Activated CD4-positive, alpha-beta T cell treated with anti-CD3 and anti-CD28 coated beads for 36 hours (primary cell): ENCODE measurements at regions of chr21 and their contacts with region 1.

Region 1: DNA sequence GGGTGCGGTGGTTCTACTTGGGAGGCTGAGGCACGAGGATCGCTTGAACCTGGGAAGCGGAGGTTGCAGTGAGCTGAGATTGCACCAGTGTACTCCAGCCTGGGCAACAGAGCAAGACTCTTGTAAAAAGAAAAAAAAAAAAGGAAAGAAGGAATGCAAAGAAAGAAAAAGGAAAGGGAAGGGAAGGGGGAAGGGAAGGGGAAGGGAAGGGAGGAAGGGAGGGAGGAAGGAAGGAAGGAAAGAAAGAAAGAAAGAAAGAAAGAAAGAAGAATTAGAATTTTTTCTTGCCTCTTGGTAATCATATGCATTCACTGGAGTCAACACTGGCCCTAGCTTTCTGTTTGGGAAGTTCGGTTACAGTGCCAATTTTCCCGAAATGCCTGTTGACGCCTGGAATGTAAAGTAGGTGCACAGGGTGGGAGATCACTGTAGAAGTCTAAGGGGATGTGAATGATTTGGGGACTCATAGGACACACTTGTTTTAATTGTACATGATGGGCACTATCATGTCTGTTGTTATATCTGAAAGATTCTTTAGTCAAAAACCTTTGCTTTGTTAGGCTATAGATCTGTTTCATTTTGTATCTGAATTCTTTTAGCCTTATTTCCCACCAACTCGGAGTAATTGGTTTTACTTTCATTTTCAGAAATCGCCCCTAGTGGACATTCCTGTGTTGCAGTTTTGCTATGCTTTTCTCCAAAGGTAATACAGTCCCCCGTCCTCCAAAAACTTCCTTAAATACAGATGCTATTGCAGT is 59.8 kb upstream of the MORC3 start:
- DNase-seq: peak; percentile 52
- ATAC-seq: peak; percentile 82
- H3K4me3 Mint-ChIP-seq: peak overlapping the region; percentile 62
- H3K27ac Mint-ChIP-seq: peak overlapping the region; percentile 87
- H3K4me1 Mint-ChIP-seq: peaks cover 19% of the 10 kb centered on the region
- H3K27me3 Mint-ChIP-seq: no peaks in the 10 kb centered on the region

Region 2: DNA sequence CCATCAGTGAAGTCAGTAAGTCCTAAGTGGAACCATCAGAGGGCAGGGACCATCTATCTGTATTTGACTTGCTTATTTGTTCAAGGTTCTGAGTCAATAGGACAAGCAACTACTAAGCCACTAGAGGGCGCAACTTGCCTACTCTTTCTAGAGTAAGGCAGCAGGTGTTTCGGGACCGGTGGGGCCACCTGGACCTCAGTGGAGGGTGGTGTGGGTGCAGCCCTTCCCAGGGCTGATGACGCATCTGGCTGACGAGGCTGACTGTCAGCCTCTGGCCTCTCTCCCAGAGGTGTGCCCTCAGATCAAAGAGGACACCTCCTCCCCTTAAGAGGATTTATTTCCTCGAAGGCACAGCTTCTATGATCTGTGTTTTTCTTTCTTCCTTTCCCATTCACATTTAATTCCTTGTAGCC is 118.7 kb before region 1 on chr21:
- CTCF ChIA-PET with region 1: interaction called, 3 read pairs
- POLR2A ChIA-PET with region 1: no interaction called
- intact Hi-C with region 1: loop called in 1 of 2 experiments (anchors 5 kb)
- DNase-seq: peak; percentile 92
- ATAC-seq: peak; percentile 96
- H3K4me3 Mint-ChIP-seq: no peak overlapping the region
- H3K27ac Mint-ChIP-seq: peak overlapping the region; percentile 29
- H3K4me1 Mint-ChIP-seq: peaks cover 25% of the 10 kb centered on the region
- H3K27me3 Mint-ChIP-seq: no peaks in the 10 kb centered on the region

Region 3: DNA sequence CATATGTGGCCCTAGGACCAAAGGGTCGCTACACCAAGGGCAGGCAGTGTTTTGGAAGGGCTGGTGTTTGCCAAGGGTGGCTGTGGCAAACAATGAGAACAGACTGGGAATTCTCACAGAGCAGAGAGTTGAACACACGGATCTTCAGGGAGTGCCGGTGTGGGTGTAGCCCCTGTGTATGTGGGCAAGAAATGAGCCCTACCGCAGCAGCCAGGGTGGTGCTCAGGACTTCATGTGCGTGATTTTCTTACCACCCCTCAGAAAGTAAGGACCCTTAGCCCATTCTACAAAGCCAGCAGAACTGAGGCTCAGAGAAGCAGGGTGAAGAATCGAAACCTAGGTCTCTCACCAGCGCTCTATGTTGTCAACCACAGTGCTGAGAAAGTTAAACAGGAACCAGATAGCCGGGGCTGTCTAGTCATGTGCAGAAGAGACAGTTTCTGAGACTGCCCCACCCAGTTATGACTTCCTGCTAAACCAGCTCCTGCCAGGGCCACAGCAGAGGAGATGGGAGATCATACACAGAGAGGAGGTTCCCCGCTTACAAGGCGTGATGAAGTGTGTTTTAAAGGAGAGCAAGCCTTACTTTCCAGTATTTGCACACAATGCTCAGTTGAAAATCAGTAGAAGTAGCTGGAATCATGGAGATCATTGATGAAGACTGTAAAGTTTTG is 37.8 kb after region 1 on chr21:
- CTCF ChIA-PET with region 1: no interaction called
- POLR2A ChIA-PET with region 1: no interaction called
- intact Hi-C with region 1: loop called in 1 of 2 experiments (anchors 1 kb)
- DNase-seq: peak; percentile 80
- ATAC-seq: peak; percentile 96
- H3K4me3 Mint-ChIP-seq: peak overlapping the region; percentile 57
- H3K27ac Mint-ChIP-seq: peak overlapping the region; percentile 90
- H3K4me1 Mint-ChIP-seq: peaks cover 47% of the 10 kb centered on the region
- H3K27me3 Mint-ChIP-seq: no peaks in the 10 kb centered on the region

Region 4: DNA sequence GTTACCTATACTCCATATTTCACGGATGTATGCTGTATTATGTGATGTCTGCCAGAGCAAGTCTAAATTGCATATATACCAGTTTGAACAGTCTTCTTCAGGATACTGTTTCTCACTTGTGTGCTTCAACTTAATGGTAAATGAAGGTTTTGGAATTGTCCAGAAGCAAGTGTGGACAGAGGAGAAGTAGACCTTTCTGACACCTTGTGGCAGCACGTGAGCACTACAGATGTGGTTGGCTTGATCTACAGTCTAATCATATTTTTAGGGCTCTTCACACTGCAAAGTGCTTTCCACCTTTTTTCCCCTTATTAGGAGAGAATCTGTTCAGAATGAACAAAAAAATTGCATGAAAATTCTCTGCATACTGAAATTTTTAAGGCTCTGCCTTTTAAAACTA is 70.7 kb after region 1 on chr21:
- CTCF ChIA-PET with region 1: interaction called, 4 read pairs
- POLR2A ChIA-PET with region 1: no interaction called
- intact Hi-C with region 1: loop called (anchors 2 kb)
- DNase-seq: peak; percentile 67
- ATAC-seq: peak; percentile 92
- H3K4me3 Mint-ChIP-seq: no peak overlapping the region
- H3K27ac Mint-ChIP-seq: no peak overlapping the region
- H3K4me1 Mint-ChIP-seq: peaks cover 42% of the 10 kb centered on the region
- H3K27me3 Mint-ChIP-seq: no peaks in the 10 kb centered on the region

Region 5: DNA sequence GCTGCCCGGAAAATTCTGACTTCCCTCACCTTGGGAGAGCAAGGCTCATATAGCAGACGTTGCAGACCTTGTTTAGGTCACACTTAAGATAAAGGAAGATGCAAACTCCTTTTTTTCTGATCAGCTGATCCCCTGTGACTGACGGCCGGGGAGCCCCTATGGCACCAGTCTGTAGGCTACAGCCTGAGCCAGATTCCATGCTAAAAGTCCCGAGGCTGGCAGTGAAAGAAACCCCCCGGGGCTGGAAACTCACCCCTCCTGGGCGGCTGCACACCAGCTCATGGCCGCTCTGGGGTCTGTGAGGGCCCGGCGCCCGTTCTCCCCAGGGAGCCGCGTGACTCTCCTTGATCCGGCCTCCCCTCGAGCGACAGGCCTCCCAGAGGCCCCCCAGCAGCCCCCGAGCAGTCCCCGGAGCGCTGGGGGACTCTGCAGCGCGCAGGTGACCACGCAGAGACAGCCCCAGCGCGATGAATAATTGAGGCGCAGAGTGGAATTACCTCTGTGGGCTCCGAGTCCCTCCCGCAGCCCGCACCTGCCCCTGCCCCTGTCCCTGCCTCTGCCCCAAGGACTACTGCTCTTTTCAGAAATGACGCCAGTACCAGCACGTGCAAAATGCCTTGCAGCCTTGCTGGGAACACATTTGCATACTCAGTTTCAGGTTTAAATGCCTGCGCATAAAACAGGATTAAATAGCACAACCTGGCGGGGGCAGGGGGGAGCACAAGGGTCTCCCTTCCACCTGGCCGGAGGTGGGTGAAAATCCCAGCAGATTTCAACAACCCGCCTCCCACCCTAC is 282.3 kb after region 1 on chr21:
- CTCF ChIA-PET with region 1: no interaction called
- POLR2A ChIA-PET with region 1: no interaction called
- intact Hi-C with region 1: no loop called
- DNase-seq: peak; percentile 17
- ATAC-seq: no peak
- H3K4me3 Mint-ChIP-seq: no peak overlapping the region
- H3K27ac Mint-ChIP-seq: no peak overlapping the region
- H3K4me1 Mint-ChIP-seq: no peaks in the 10 kb centered on the region
- H3K27me3 Mint-ChIP-seq: peaks cover 10% of the 10 kb centered on the region